ENCODE measurements at regions of chr17 and their contacts with region 1.

Region 1: DNA sequence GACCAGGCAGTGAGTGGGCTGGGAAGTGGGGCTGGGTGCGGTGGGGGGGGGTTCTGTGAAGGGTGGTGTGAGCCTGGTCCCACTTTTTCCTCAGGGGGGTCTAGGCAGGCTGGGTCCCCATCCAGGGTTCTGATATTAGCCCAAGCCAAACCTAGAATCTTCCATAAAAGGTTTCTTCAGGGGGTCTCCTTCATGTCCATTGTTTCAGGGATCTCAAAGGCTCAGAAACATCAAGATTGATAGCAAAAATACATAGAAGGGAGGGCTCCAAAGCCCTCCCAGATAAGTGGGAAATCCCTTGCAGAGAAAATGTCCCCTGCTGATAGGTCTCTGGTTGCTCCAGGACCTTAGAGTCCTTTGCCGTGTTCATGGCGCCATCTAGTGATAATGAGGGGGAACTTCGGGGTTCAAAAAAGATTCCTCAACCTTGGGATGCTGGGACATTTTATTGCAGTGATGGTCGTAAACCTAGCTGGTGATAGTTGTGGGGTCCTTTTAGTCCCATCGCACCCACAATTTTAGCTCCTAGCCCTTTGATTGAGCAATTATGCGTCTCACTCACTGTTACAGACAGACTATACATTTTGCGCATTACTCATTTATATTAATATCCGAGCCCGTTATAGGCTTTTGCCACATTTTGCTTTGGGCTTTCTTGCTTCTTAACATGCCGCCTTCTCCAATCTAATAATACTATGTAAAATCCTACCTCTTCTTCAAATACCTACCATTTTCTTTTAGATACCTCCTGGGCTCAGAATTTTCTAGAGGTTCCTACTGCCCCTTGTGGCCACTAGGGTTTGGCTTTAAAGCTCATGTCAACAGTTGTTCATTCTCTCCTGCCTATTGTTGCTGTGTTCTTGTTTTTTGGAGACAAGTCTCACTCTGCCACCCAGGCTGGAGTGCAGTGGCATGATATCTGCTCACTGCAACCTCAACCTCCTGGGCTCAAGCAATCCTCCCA is 35.1 kb downstream of the IGF2BP1 start:
- DNase-seq: peak; percentile 34
- H3K4me3 Mint-ChIP-seq: no peak overlapping the region
- H3K27ac Mint-ChIP-seq: no peak overlapping the region
- H3K4me1 Mint-ChIP-seq: peaks cover 4% of the 10 kb centered on the region
- H3K27me3 Mint-ChIP-seq: peaks cover 3% of the 10 kb centered on the region

Region 2: DNA sequence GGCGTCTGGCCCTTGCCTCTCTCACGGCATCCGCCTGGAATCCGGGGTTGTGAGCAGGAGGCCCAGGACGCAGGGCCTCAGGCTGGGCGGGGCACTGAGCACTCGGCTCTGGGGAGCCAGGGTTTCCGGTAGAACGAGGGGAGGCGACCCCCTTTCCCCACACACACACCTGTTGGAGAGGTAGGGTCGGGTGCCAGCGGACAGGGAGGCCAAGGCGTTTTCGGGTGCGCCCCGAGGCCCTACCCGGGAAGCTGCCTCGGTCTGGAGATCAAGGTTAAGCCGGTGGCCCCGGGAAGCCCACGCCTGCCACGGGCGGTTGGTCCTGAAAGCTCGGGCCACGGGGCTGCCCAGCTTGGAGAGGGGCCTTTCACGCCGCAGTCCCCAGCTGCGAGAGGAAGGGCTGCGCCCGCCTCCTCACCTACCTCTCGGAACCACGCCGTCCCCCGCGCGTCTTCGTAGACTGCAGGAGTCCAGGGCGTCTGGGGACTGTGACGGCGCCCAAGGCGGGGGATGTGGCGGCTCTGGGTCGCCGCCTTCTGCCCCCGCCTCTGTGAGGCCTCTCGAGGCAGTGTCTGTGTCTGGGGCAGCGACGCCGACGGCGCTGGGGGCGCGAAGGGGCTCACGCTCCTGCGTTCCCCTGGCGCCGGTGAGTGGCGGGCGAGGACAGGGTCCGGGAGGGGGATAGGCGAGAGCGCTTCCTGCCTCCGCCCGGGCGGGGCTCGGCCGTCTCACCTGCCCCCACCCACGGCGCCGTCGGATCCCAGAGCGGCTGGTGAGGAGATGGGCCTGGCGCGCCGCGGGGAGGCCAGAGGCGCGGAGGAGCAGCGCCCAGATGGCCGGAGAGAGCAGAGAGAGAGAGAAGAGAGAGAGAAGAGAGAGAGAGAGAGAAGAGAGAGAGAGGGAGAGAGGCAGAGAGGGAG is 385.8 kb before region 1 on chr17:
- intact Hi-C with region 1: no loop called
- DNase-seq: no peak
- H3K4me3 Mint-ChIP-seq: peak overlapping the region; percentile 75
- H3K27ac Mint-ChIP-seq: no peak overlapping the region
- H3K4me1 Mint-ChIP-seq: peaks cover 14% of the 10 kb centered on the region
- H3K27me3 Mint-ChIP-seq: peaks cover 75% of the 10 kb centered on the region

Region 3: DNA sequence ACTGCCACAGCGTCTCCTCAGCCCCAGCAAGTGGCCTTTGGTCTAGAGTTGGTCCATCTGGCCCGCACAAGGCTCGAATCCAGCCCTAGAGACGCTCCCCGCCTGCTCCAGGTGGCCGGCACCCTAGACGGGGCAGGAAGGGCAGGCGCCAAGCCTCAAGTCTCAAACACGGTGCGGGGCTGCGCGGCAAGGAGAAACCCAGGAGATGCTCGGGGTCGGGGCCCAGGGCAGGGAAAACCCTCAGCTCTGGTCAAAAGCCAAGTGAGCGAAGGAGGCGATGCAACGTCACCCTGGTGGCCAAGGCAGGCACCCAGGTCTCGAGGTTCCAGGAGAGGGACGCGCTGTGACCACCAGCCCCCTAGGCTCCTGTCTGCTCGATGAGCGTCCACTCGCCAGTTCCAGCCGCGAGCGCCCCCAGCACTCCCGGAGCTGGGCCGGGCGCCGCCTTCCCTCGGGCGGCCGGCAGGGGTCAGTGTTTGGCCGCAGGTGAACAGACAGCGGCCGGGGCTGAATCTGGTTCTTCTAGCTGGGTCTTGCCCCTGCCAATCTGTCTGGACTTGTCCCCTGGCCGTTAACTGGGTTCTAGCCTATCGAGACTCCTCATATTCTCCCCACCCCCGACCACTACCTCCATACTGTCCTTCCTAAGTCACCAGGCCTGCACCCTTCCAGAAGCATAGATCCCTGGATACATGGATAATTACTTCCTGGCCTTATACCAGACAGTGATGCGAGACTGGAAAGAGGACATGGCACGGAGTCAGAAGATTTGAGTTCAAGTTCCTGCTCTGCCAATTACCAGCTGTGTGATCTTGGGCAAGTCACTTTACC is 353.9 kb before region 1 on chr17:
- intact Hi-C with region 1: loop called (anchors 2 kb)
- DNase-seq: peak; percentile 54
- H3K4me3 Mint-ChIP-seq: no peak overlapping the region
- H3K27ac Mint-ChIP-seq: no peak overlapping the region
- H3K4me1 Mint-ChIP-seq: peaks cover 5% of the 10 kb centered on the region
- H3K27me3 Mint-ChIP-seq: peaks cover 42% of the 10 kb centered on the region

Region 4: DNA sequence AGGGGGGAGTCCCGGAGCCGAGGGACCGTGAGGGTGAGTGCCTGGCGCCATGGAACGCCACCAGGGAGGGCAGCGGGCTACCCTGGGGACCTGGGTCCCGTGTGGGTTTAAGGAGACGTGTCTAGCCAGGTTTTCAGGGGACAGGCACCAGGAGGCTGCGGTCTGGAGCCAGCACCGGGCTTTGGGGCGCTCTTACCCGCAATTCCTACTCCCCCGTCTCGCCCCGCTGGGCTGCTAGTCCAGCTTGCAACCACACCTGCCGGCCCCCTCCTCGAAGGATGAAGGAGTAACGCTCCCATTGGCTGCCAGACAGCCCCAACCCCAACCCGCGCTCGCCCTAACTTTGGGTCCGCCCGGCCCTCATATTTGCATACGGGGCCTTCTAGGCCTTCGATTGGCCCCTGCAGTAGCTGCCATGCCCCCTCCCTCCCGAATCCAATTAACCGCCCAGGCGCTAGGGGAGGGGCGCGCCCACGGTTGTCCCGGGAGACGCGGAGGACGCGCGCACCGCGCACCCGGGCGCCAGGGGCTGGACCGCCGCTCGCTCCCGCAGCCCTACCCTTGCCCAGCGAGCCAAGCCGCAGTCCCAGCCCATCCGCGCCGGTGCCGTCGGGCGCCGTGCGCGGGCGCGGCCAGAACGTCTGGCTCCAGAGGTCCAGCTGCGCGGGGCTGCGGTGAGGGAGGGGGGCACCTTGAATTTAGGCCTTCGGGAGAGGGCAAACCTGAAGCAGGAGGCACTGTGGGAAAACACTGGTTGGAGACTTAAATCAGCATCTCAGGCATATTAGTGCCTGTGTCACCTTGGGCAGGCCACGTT is 215.3 kb before region 1 on chr17 and contains the start of gene TTLL6:
- intact Hi-C with region 1: loop called (anchors 2 kb)
- DNase-seq: peak; percentile 84
- H3K4me3 Mint-ChIP-seq: peak within 1 kb of the TSS; percentile 77
- H3K27ac Mint-ChIP-seq: no peak within 1 kb of the TSS
- H3K4me1 Mint-ChIP-seq: peaks cover 15% of the 10 kb centered on the region
- H3K27me3 Mint-ChIP-seq: peaks cover 64% of the 10 kb centered on the region
- total RNA-seq, gene TTLL6: 0.07 TPM in 1 of 2 replicates, not detected in the other

Region 5: DNA sequence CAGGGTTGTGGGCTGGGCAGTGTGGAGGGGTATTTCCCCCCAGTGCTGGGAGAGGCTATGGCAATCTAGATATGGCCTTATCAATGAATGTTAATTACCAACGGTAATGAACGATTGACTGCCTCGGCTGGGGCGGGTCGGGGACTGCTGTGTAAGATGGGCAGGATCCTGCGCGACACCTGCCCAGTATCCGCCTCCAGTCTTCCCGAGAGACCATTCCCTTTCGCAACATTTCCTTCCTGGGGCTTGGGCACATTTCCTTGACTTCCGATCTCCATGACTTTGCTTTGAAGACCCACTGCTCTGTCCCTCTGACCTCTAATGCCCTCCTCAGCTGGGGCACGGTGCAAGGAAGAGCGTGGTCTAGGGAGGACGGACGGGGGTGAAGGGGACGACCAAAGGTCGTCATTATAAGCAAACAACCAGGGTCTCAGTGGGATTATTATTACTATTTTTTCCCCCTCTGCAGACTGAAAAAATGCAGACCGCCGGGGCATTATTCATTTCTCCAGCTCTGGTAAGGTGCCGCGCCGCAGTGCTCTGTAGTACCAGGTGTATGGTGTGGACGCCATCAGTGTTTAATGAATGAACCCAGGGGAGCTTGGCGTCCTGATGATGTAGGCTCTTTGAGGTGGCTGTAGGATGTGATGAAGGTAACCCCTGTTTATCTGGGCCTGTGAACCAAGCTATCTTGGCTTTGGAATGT is 139.2 kb before region 1 on chr17:
- intact Hi-C with region 1: loop called (anchors 5 kb)
- DNase-seq: no peak
- H3K4me3 Mint-ChIP-seq: peak overlapping the region; percentile 96
- H3K27ac Mint-ChIP-seq: peak overlapping the region; percentile 92
- H3K4me1 Mint-ChIP-seq: peaks cover 20% of the 10 kb centered on the region
- H3K27me3 Mint-ChIP-seq: no peaks in the 10 kb centered on the region

Region 6: GRCh38 chr17:48944519-48945260 is 87.6 kb before region 1 on chr17 and contains the start of gene SNF8:
- intact Hi-C with region 1: loop called (anchors 10 kb)
- DNase-seq: peak; percentile 91
- H3K4me3 Mint-ChIP-seq: peak within 1 kb of the TSS; percentile 100
- H3K27ac Mint-ChIP-seq: peak within 1 kb of the TSS; percentile 96
- H3K4me1 Mint-ChIP-seq: peaks cover 12% of the 10 kb centered on the region
- H3K27me3 Mint-ChIP-seq: no peaks in the 10 kb centered on the region
- total RNA-seq, gene SNF8: 145 and 152 TPM in 2 replicates

Region 7: GRCh38 chr17:48985436-48986245 is 46.6 kb before region 1 on chr17:
- intact Hi-C with region 1: no loop called
- DNase-seq: no peak
- H3K4me3 Mint-ChIP-seq: no peak overlapping the region
- H3K27ac Mint-ChIP-seq: no peak overlapping the region
- H3K4me1 Mint-ChIP-seq: no peaks in the 10 kb centered on the region
- H3K27me3 Mint-ChIP-seq: peaks cover 17% of the 10 kb centered on the region

Region 8: DNA sequence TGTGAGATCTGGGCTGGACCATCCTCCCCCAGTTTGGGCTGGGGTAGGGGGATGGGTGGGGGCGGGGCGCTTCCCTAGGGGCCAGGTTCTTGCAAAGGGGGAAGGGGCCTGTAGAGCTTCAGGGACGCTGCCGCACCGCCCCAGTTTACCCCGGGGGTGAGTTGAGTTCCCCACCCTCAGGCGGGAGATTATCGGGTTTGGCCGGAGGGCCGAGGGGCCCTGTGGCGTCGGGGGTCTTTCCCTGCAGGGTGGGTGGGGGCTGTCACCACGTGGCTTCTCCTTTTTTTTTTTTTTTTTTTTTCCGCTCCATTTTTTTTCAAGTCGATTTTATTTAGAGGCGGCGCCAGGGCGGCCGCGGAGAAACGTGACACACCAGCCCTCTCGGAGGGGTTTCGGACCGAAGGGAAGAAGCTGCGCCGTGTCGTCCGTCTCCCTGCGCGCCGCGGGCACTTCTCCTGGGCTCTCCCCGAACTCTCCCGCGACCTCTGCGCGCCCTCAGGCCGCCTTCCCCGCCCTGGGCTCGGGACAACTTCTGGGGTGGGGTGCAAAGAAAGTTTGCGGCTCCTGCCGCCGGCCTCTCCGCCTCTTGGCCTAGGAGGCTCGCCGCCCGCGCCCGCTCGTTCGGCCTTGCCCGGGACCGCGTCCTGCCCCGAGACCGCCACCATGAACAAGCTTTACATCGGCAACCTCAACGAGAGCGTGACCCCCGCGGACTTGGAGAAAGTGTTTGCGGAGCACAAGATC is 35.0 kb before region 1 on chr17 and contains the start of gene IGF2BP1:
- intact Hi-C with region 1: no loop called
- DNase-seq: no peak
- H3K4me3 Mint-ChIP-seq: peak within 1 kb of the TSS; percentile 30
- H3K27ac Mint-ChIP-seq: peak within 1 kb of the TSS; percentile 39
- H3K4me1 Mint-ChIP-seq: peaks cover 9% of the 10 kb centered on the region
- H3K27me3 Mint-ChIP-seq: peaks cover 81% of the 10 kb centered on the region
- total RNA-seq, gene IGF2BP1: 0.09 and 0.32 TPM in 2 replicates

Measured in activated T-helper 2 cell treated with anti-CD3 and anti-CD28 coated beads, Interferon-gamma antibody, Interleukin-2, Interleukin-4, amounts not matched to agents 10 μg/mL and 5 μg/mL and 100 μg/mL, durations not matched to agents 14 hours and 24 hours and 36 hours (primary cell).